ENCODE measurements at regions of chr4 and their contacts with region 1.

Region 1: GRCh38 chr4:71184195-71184781 is 154.5 kb upstream of the SLC4A4 start:
- DNase-seq: peak; percentile 13
- ATAC-seq: peak; percentile 90
- H3K4me3 ChIP-seq: no peak overlapping the region
- H3K27ac ChIP-seq: no peak overlapping the region
- H3K4me1 ChIP-seq: no peaks in the 10 kb centered on the region
- H3K27me3 ChIP-seq: peaks cover 5 to 24% of the 10 kb centered on the region in 2 experiments
- CTCF ChIP-seq: peak; percentile 64 to 75 (median 72)
- EP300 ChIP-seq: no peak
- POLR2A ChIP-seq: no peak
- RAD21 ChIP-seq: peak; percentile 75

Region 2: GRCh38 chr4:70601422-70602039 is 582.8 kb before region 1 on chr4:
- CTCF ChIA-PET with region 1: interaction called, 4 read pairs
- POLR2A ChIA-PET with region 1: no interaction called
- RAD21 ChIA-PET with region 1: no interaction called
- SMC1A ChIA-PET with region 1: interaction called, 3 read pairs
- in situ Hi-C with region 1: no loop called
- intact Hi-C with region 1: loop called (anchors 10 kb)
- DNase-seq: peak; percentile 34
- ATAC-seq: peak; percentile 98
- H3K4me3 ChIP-seq: no peak overlapping the region
- H3K27ac ChIP-seq: no peak overlapping the region
- H3K4me1 ChIP-seq: no peaks in the 10 kb centered on the region
- H3K27me3 ChIP-seq: no peaks in the 10 kb centered on the region; a peak in 1 of 4 replicates
- CTCF ChIP-seq: peak; percentile 90 to 94 (median 92)
- EP300 ChIP-seq: no peak
- POLR2A ChIP-seq: no peak
- RAD21 ChIP-seq: peak; percentile 99

Region 3: DNA sequence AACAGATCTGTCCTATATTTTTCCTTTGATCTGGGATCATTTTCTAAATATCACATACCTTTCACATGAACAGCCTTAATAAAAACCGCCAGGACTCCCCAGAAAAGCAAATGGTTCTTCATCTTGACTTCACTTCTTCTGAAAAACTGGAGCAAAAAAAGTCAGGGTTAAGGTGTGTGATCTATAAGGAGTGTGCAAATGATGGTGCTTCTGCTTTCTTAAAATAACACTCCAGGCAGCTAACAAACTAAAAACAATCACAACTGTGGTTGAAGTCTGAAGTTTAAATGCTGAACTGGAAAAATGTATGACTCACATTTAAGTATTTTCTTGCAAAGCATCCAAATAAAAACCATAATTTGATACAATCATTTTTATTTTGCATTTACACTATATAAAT is 517.9 kb before region 1 on chr4 and contains the start of gene JCHAIN:
- CTCF ChIA-PET with region 1: no interaction called
- POLR2A ChIA-PET with region 1: no interaction called
- RAD21 ChIA-PET with region 1: no interaction called
- SMC1A ChIA-PET with region 1: no interaction called
- in situ Hi-C with region 1: no loop called
- intact Hi-C with region 1: no loop called
- DNase-seq: no peak
- ATAC-seq: peak; percentile 63
- H3K4me3 ChIP-seq: peak within 1 kb of the TSS; percentile 58
- H3K27ac ChIP-seq: peak within 1 kb of the TSS; percentile 48
- H3K4me1 ChIP-seq: peaks cover 9% of the 10 kb centered on the region
- H3K27me3 ChIP-seq: no peaks in the 10 kb centered on the region
- CTCF ChIP-seq: no peak
- EP300 ChIP-seq: peak in 1 of 2 experiments; percentile 53; a peak in 1 of 4 replicates
- POLR2A ChIP-seq: no peak
- RAD21 ChIP-seq: no peak
- polyA plus RNA-seq, gene JCHAIN: 617 to 1,045 TPM

Region 4: DNA sequence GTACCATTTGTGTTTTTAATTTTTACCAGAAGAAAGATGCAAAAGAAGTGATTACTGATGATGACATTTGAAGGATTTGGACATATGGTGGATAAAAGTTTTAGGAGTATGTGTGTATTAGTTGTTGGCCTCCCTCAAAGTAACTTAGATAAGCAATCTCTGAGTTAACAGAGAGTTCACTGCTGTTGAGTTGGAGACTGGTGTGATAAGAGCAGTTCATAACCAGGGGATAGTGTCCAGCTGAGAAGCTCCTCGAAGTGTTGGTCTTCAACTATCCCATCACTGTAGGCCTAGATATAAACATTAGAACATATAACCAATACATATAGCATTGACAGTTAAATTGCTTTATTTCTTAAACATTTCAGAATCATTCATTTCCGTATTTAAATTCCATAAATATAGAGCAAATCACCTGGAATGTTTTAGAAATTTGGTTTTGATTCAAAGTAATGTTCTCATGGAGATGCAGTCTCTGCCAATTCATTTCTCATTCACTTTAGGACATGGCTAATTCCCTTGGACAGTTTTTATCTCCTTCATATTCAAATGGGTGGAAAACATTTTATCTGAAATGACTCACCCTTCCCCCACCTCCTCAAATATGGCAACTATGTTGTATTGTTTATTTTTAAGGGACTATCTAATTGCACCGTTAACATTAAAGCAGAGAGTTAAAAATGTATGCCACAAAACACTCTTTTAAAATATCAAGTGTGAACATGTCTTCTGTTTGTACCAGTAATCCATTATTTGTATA is 17.7 kb after region 1 on chr4:
- CTCF ChIA-PET with region 1: interaction called, 11 read pairs
- POLR2A ChIA-PET with region 1: no interaction called
- RAD21 ChIA-PET with region 1: no interaction called
- SMC1A ChIA-PET with region 1: no interaction called
- in situ Hi-C with region 1: no loop called
- intact Hi-C with region 1: no loop called
- DNase-seq: no peak
- ATAC-seq: no peak
- H3K4me3 ChIP-seq: no peak overlapping the region
- H3K27ac ChIP-seq: no peak overlapping the region
- H3K4me1 ChIP-seq: no peaks in the 10 kb centered on the region
- H3K27me3 ChIP-seq: no peaks in the 10 kb centered on the region
- CTCF ChIP-seq: no peak
- EP300 ChIP-seq: no peak
- POLR2A ChIP-seq: no peak
- RAD21 ChIP-seq: no peak

Region 5: GRCh38 chr4:71254451-71255012 is 70.2 kb after region 1 on chr4:
- CTCF ChIA-PET with region 1: interaction called, 17 read pairs
- POLR2A ChIA-PET with region 1: no interaction called
- RAD21 ChIA-PET with region 1: interaction called, 3 read pairs
- SMC1A ChIA-PET with region 1: interaction called, 6 read pairs
- in situ Hi-C with region 1: no loop called
- intact Hi-C with region 1: no loop called
- DNase-seq: no peak
- ATAC-seq: peak; percentile 86
- H3K4me3 ChIP-seq: no peak overlapping the region
- H3K27ac ChIP-seq: no peak overlapping the region
- H3K4me1 ChIP-seq: no peaks in the 10 kb centered on the region
- H3K27me3 ChIP-seq: no peaks in the 10 kb centered on the region
- CTCF ChIP-seq: no peak; a peak in 1 of 6 replicates
- EP300 ChIP-seq: no peak
- POLR2A ChIP-seq: no peak
- RAD21 ChIP-seq: peak; percentile 55; the same call in 1 of the 2 replicates

Region 6: GRCh38 chr4:71713611-71714203 is 529.4 kb after region 1 on chr4:
- CTCF ChIA-PET with region 1: interaction called, 5 read pairs
- POLR2A ChIA-PET with region 1: no interaction called
- RAD21 ChIA-PET with region 1: no interaction called
- SMC1A ChIA-PET with region 1: interaction called, 3 read pairs
- in situ Hi-C with region 1: no loop called
- intact Hi-C with region 1: loop called (anchors 1 kb)
- DNase-seq: no peak
- ATAC-seq: peak; percentile 70
- H3K4me3 ChIP-seq: no peak overlapping the region
- H3K27ac ChIP-seq: no peak overlapping the region
- H3K4me1 ChIP-seq: no peaks in the 10 kb centered on the region
- H3K27me3 ChIP-seq: no peaks in the 10 kb centered on the region
- CTCF ChIP-seq: peak; percentile 33 to 66 (median 46); a peak in 5 of 6 replicates
- EP300 ChIP-seq: no peak
- POLR2A ChIP-seq: no peak
- RAD21 ChIP-seq: peak; percentile 86